ENCODE measurements at regions of chr19 and their contacts with region 1.

Region 1: GRCh38 chr19:3404324-3405260 is 38.2 kb downstream of the NFIC start:
- DNase-seq: peak; percentile 86
- H3K4me3 ChIP-seq: peak overlapping the region; percentile 31 to 33
- H3K27ac ChIP-seq: peak overlapping the region; percentile 99 to 100
- H3K4me1 ChIP-seq: peaks cover 26% of the 10 kb centered on the region
- H3K27me3 ChIP-seq: no peaks in the 10 kb centered on the region
- CTCF ChIP-seq: peak in 1 of 4 experiments; percentile 32
- POLR2A ChIP-seq: peak; percentile 67

Region 2: DNA sequence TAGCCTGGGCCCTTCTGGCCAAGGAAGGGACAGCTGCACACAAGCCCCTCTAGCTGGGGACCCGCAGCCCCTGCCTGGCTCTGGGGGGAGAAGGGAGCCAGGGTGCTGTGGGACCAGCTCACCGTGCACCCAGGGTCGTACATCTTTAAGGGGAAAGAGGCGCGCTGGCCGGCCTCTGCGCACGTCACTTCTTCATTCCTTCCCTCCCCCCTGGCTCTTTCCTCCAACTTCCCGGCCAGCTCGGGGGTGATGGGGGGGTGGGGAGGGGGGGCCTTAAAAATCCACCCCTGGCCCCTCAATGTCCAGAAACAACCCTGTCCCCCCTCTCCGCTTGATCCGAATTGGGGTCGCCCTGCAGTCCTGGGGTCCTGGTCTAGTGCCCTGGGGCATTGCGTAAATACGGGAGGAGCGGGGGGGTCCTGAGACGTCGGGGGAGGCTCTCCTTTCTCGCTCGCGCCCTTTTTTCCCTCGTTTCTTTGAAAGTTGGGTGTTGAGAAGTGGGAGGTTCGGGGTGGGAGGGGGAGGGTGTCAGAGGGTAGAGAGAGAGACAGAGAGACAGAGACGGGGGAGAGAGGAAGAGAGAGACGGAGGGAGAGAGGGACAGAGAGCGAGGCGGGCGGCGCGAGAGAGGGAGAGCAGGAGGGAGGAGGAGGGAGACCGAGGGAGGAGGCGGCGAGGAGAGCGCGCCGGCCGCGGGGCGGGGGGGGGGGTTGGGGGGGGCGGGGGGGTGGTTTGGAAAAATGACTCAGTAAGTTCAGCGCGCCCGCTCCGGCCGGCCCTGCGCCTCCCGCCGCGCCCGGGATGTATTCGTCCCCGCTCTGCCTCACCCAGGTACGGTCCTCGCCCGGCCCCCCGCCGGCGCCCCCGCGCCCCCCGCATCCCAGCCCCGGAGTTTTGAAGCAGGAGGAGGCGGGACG is 38.5 kb before region 1 on chr19 and contains the start of gene NFIC:
- intact Hi-C with region 1: loop called (anchors 5 kb)
- DNase-seq: peak; percentile 70
- H3K4me3 ChIP-seq: peak within 1 kb of the TSS; percentile 79 to 99
- H3K27ac ChIP-seq: peak within 1 kb of the TSS; percentile 96 to 100
- H3K4me1 ChIP-seq: peaks cover 30% of the 10 kb centered on the region
- H3K27me3 ChIP-seq: no peaks in the 10 kb centered on the region
- CTCF ChIP-seq: no peak
- POLR2A ChIP-seq: peak; percentile 24
- total RNA-seq, gene NFIC: 160 to 168 TPM